Dendritic cell treated with granulocyte-macrophage colony-stimulating factor and Interleukin-4, amounts not matched to agents 40 ng/mL and 50 ng/mL, for 4 days (primary cell): ENCODE measurements at regions of chr12 and their contacts with region 1.

Region 1: DNA sequence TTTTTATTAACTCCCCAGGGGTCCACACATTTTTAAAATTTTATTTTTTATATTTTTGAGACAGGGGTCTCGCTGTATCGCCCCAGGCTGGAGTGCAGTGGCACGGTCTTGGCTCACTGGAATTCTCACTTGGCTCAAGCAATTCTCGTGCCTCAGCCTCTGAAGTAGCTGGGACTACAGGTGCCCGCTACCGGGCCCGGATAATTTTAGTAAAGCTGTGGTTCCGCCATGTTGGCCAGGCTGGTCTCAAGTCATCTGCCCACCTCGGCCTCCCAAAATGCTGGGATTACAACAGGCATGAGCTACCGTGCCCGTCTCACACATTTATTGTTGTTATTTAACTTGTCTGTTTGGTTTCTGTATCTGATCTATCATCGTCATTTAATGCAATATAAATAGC is 307.4 kb downstream of the TMTC2 start:
- H3K4me3 Mint-ChIP-seq: no peak overlapping the region
- H3K27ac Mint-ChIP-seq: no peak overlapping the region
- H3K4me1 Mint-ChIP-seq: no peaks in the 10 kb centered on the region
- H3K27me3 Mint-ChIP-seq: no peaks in the 10 kb centered on the region

Region 2: GRCh38 chr12:81022531-81022930 is 1971.6 kb before region 1 on chr12:
- intact Hi-C with region 1: no loop called
- H3K4me3 Mint-ChIP-seq: no peak overlapping the region
- H3K27ac Mint-ChIP-seq: no peak overlapping the region
- H3K4me1 Mint-ChIP-seq: no peaks in the 10 kb centered on the region
- H3K27me3 Mint-ChIP-seq: no peaks in the 10 kb centered on the region

Region 3: GRCh38 chr12:82638324-82638723 is 355.8 kb before region 1 on chr12:
- intact Hi-C with region 1: no loop called
- H3K4me3 Mint-ChIP-seq: no peak overlapping the region
- H3K27ac Mint-ChIP-seq: no peak overlapping the region
- H3K4me1 Mint-ChIP-seq: no peaks in the 10 kb centered on the region
- H3K27me3 Mint-ChIP-seq: no peaks in the 10 kb centered on the region

Region 4: GRCh38 chr12:82694956-82695355 is 299.2 kb before region 1 on chr12:
- intact Hi-C with region 1: loop called (anchors 5 kb)
- H3K4me3 Mint-ChIP-seq: no peak overlapping the region
- H3K27ac Mint-ChIP-seq: no peak overlapping the region
- H3K4me1 Mint-ChIP-seq: no peaks in the 10 kb centered on the region
- H3K27me3 Mint-ChIP-seq: no peaks in the 10 kb centered on the region

Region 5: DNA sequence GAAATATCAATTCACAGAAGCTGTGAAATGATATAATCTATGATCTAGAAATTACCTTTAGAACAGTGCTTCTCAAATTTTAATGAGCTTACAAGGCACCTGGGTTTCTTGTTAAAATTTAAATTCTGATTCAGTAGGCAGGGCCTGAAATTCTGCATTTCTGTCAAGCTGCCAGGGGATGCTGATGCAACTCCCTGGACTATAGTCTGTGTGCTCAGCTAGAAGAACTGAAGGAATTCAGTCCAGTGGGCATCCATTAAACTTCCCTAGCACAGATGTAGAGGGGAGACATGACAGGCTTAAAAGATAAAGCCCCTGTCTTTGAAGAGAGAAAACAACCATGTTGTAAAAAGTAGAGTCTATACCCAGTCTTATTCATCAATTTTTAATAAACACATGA is 134.4 kb after region 1 on chr12:
- intact Hi-C with region 1: no loop called
- H3K4me3 Mint-ChIP-seq: no peak overlapping the region
- H3K27ac Mint-ChIP-seq: no peak overlapping the region
- H3K4me1 Mint-ChIP-seq: no peaks in the 10 kb centered on the region
- H3K27me3 Mint-ChIP-seq: no peaks in the 10 kb centered on the region